ENCODE measurements at regions of chr11 and their contacts with region 1.

Region 1: GRCh38 chr11:47932544-47932943 is 47.8 kb upstream of the PTPRJ start:
- DNase-seq: no peak
- ATAC-seq: no peak
- H3K4me3 ChIP-seq: no peak overlapping the region
- H3K4me3 Mint-ChIP-seq: no peak overlapping the region
- H3K27ac ChIP-seq: no peak overlapping the region
- H3K27ac Mint-ChIP-seq: no peak overlapping the region
- H3K4me1 ChIP-seq: peaks cover 7 to 10% of the 10 kb centered on the region in 2 experiments
- H3K4me1 Mint-ChIP-seq: peaks cover 10 to 22% (median 20%) of the 10 kb centered on the region in 3 donors
- H3K27me3 ChIP-seq: no peaks in the 10 kb centered on the region
- H3K27me3 Mint-ChIP-seq: no peaks in the 10 kb centered on the region

Region 2: DNA sequence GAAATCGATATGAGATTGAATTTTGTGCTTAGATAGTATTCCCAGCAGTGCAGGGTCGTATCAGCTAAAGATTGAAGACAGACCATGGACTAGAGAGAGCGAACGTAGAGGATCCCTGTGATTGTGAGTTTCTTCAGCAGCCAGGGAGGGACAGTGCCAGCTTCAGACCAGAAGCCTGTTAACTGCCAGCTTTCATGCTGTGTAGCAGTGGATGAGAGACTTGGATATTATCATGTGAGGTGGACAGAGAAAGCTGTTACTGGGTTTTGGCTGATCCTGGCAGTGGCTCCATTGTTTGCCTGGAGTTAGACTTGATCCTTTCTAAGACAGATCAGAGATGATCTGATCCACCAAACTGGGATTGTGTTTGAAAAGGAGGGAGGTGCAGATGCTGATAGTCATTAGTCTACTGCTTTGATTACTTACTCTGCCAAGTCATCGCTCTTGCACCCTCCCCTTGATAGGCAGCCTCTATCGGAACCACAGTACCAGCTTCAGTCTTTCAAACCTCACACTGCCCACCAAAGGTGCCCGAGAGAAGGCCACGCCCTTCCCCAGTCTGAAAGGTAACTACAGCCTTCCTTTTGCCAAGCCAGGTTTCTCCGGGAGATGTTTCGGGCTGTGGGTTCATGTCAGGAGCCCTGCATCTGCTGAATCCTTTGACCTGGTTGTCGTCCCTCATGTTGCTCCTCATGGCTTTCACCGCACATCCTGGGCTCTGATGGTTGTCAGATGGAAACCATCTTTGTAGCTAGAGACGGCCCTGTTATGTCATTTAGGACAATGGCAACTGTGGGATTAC is 646.4 kb before region 1 on chr11:
- CTCF ChIA-PET with region 1: no interaction called
- POLR2A ChIA-PET with region 1: no interaction called
- DNase-seq: no peak
- ATAC-seq: no peak
- H3K4me3 ChIP-seq: no peak overlapping the region
- H3K4me3 Mint-ChIP-seq: no peak overlapping the region
- H3K27ac ChIP-seq: no peak overlapping the region
- H3K27ac Mint-ChIP-seq: no peak overlapping the region
- H3K4me1 ChIP-seq: no peaks in the 10 kb centered on the region
- H3K4me1 Mint-ChIP-seq: no peaks in the 10 kb centered on the region
- H3K27me3 ChIP-seq: no peaks in the 10 kb centered on the region
- H3K27me3 Mint-ChIP-seq: no peaks in the 10 kb centered on the region

Region 3: DNA sequence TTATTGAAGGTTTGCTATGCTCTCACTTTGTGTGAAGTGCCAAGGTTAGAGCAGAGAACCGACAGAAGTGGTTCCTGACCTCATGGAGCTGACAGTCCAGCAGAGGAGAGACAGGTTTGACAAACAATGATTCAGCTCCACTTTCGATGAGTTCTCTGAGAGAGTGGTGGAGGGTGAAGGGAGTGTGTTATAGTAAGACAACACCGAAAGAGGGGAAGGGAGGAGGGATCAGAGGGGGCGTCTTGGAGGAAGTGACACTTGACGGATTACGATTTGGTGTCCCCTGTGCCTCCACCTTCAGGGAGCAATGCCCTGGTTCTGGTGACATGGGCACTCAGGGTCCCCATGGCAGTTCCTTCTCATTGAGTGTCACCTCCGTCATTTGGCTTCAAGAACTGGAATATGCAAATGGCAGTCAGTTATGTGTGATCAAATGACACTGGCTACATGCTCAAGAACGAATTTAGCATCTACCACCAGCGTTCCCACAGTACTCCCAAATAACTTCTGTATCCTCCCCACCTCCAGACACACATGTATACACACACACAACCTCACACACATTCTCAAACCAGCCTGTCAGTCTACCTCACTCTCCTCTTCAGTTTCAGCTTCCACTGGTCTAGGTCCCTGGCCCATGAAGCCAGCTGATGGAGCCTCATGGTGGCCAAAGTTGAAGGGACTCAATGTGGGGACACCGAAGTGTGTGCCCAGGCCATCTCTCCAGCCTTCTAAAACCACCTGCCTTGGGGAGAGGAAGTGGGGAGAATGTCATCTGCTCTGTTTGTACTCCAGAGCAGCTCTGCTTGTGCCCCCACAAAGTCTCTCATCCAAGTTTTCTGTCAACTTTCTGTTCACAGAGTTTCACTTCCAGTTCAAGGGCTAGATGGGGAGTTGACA is 53.0 kb before region 1 on chr11:
- CTCF ChIA-PET with region 1: no interaction called
- POLR2A ChIA-PET with region 1: no interaction called
- DNase-seq: no peak
- ATAC-seq: no peak
- H3K4me3 ChIP-seq: no peak overlapping the region
- H3K4me3 Mint-ChIP-seq: no peak overlapping the region
- H3K27ac ChIP-seq: no peak overlapping the region
- H3K27ac Mint-ChIP-seq: no peak overlapping the region
- H3K4me1 ChIP-seq: peaks cover 0 to 2% of the 10 kb centered on the region in 2 experiments
- H3K4me1 Mint-ChIP-seq: peaks cover 5 to 20% (median 8%) of the 10 kb centered on the region in 3 donors
- H3K27me3 ChIP-seq: no peaks in the 10 kb centered on the region
- H3K27me3 Mint-ChIP-seq: no peaks in the 10 kb centered on the region

Region 4: DNA sequence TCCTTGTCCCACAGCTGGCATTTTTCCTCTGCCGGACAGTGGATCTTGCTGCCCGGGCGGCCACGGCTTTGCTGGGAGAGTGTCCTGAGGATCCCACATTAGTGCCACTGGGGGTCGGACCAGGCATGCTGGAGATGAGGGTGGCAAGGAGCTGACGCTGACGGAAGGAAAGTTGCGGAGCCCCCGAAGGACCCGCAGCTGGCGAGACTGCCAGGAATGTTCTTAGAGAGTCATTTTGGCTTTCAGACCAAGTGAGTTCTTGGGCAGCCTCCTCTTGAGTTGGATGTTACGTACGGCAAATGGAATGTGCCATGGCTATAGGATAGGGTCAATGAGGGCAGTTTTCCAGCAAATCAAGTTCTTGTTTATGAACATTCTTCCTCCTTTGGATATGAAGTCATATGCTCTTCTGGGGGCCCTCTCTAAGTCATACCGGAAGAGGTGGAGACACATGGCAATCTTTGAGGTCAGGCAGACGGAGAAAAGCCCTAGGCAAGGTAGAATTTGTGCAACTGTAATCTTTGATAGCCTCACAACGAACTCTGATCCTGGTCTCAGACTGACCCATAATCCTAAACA is 27.0 kb before region 1 on chr11:
- CTCF ChIA-PET with region 1: interaction called in 1 of 2 experiments, 3 read pairs
- POLR2A ChIA-PET with region 1: interaction called in 1 of 2 experiments, 11 read pairs
- DNase-seq: no peak
- ATAC-seq: no peak
- H3K4me3 ChIP-seq: no peak overlapping the region
- H3K4me3 Mint-ChIP-seq: no peak overlapping the region
- H3K27ac ChIP-seq: no peak overlapping the region
- H3K27ac Mint-ChIP-seq: no peak overlapping the region
- H3K4me1 ChIP-seq: no peaks in the 10 kb centered on the region
- H3K4me1 Mint-ChIP-seq: peaks cover 5 to 15% (median 12%) of the 10 kb centered on the region in 3 donors
- H3K27me3 ChIP-seq: no peaks in the 10 kb centered on the region
- H3K27me3 Mint-ChIP-seq: no peaks in the 10 kb centered on the region

Region 5: GRCh38 chr11:48055292-48056132 is 123.0 kb after region 1 on chr11:
- CTCF ChIA-PET with region 1: interaction called, 5 to 11 read pairs
- POLR2A ChIA-PET with region 1: interaction called, 3 to 4 read pairs
- DNase-seq: peak; percentile 34 to 83 (median 61)
- ATAC-seq: peak; percentile 78 to 90 (median 86)
- H3K4me3 ChIP-seq: peak overlapping the region; percentile 19 to 35
- H3K4me3 Mint-ChIP-seq: peak overlapping the region; percentile 64 to 78 (median 70)
- H3K27ac ChIP-seq: peak overlapping the region; percentile 62
- H3K27ac Mint-ChIP-seq: peak overlapping the region; percentile 74 to 83
- H3K4me1 ChIP-seq: peaks cover 57 to 82% of the 10 kb centered on the region in 2 experiments
- H3K4me1 Mint-ChIP-seq: peaks cover 88 to 89% (median 89%) of the 10 kb centered on the region in 3 donors
- H3K27me3 ChIP-seq: no peaks in the 10 kb centered on the region
- H3K27me3 Mint-ChIP-seq: no peaks in the 10 kb centered on the region

Region 6: DNA sequence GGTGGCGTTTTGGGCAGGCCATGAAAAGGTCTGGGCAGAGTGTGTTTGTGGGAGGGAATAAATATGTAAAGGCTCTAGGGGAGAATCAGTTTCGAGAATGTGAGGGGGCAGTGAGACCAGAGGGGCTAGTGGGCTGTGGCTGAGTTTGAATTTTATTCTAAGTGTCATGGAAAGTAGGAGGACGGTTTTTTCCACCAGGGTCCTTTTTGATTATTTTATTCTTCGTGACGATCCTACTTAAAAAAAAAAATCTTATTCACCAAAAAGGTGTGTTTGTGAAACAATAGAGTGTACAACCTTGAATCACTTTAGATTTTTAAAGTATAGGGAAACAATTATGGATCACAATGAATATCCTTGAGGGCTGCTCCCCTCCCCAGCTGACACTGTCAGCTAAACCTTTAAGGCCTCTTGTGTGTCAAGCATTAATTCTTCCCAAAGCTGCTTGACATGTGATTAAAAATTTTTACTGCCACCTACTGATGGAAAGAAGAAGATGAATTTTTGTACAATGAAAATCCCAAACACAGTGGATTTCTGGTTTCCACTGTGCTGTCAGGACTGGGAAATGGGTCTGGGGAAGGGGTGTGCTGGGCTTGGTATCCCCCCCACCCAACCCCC is 176.6 kb after region 1 on chr11:
- CTCF ChIA-PET with region 1: interaction called, 95 to 146 read pairs
- POLR2A ChIA-PET with region 1: interaction called, 3 to 4 read pairs
- DNase-seq: peak in 1 of 35 experiments; percentile 61
- ATAC-seq: peak; percentile 37 to 52 (median 50)
- H3K4me3 ChIP-seq: peak overlapping the region; percentile 40 to 43
- H3K4me3 Mint-ChIP-seq: peak overlapping the region in 2 of 3 donors; percentile 22 to 78
- H3K27ac ChIP-seq: peak overlapping the region; percentile 60
- H3K27ac Mint-ChIP-seq: peak overlapping the region; percentile 81 to 88
- H3K4me1 ChIP-seq: peaks cover 16 to 38% of the 10 kb centered on the region in 2 experiments
- H3K4me1 Mint-ChIP-seq: peaks cover 51 to 58% (median 52%) of the 10 kb centered on the region in 3 donors
- H3K27me3 ChIP-seq: no peaks in the 10 kb centered on the region
- H3K27me3 Mint-ChIP-seq: no peaks in the 10 kb centered on the region

Region 7: DNA sequence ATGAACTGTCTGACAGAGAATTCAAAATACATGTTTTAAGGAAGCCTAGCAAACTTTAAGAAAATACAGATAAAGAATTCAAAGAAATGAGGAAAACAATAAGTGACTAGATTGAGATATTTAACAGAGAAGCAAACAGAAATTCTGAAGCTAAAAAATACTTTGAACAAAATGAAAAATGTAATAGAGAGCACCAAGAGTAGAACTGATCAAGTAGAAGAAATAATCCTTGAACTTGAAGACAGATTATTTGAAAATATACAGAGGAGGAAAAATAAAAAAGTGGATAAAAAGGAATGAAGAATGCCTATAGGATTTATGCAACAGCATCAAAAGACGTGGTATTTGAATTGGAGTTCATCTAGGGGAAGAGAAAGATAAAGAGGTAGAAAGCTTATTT is 182.2 kb after region 1 on chr11:
- CTCF ChIA-PET with region 1: interaction called, 95 to 146 read pairs
- POLR2A ChIA-PET with region 1: interaction called in 1 of 2 experiments, 3 read pairs
- DNase-seq: no peak
- ATAC-seq: no peak
- H3K4me3 ChIP-seq: no peak overlapping the region
- H3K4me3 Mint-ChIP-seq: no peak overlapping the region
- H3K27ac ChIP-seq: no peak overlapping the region
- H3K27ac Mint-ChIP-seq: peak overlapping the region in 1 of 2 donors; percentile 44
- H3K4me1 ChIP-seq: peaks cover 2 to 6% of the 10 kb centered on the region in 2 experiments
- H3K4me1 Mint-ChIP-seq: peaks cover 3 to 8% (median 5%) of the 10 kb centered on the region in 3 donors
- H3K27me3 ChIP-seq: no peaks in the 10 kb centered on the region
- H3K27me3 Mint-ChIP-seq: no peaks in the 10 kb centered on the region

Measured in T-cell (primary cell).